ENCODE measurements at regions of chr5 and their contacts with region 1.

Region 1: DNA sequence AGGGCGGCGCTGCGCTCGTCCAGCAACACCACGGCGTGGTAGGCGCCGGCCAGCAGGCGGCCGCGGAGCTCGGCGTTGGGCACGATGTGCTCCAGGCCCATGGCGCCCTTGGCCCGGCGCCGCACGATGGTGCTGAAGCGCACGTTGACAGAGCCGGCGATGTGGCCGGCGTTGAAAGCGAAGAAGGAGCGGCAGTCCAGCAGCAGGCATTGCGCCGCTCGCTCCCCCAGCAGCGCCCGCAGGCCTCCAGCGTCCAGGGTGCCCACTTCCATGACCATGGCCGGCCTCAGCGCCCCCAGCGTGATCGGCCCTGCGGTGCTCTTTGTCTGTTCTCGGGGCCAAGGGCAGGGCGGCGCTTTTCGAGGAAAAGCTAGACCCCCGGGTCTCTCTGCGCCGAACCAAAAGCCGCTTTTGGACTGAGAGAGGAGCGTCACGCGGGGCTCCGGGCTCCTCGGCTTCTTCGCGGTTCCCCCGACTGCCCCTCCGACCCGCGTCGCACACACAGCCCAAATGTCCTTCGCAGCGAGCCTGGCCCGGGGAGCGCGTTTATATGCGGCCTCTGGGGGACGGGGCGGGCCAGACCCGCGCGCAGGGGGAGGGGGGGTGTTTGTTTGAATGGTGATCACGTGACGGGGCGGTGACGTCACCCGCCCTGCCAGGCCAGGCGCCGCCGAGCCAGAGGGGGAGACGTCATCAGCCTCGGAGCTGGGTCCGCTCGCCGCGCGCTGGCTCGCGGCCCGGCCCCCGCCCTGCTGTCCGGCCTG is at the start of gene DUSP1:
- DNase-seq: peak; percentile 100
- H3K4me3 ChIP-seq: peak within 1 kb of the TSS; percentile 78 to 80
- H3K27ac ChIP-seq: peak within 1 kb of the TSS; percentile 96 to 98
- H3K4me1 ChIP-seq: peaks cover 8 to 47% (median 28%) of the 10 kb centered on the region in 4 donors
- H3K27me3 ChIP-seq: no peaks in the 10 kb centered on the region
- CTCF ChIP-seq: peak; percentile 28 to 60

Region 2: DNA sequence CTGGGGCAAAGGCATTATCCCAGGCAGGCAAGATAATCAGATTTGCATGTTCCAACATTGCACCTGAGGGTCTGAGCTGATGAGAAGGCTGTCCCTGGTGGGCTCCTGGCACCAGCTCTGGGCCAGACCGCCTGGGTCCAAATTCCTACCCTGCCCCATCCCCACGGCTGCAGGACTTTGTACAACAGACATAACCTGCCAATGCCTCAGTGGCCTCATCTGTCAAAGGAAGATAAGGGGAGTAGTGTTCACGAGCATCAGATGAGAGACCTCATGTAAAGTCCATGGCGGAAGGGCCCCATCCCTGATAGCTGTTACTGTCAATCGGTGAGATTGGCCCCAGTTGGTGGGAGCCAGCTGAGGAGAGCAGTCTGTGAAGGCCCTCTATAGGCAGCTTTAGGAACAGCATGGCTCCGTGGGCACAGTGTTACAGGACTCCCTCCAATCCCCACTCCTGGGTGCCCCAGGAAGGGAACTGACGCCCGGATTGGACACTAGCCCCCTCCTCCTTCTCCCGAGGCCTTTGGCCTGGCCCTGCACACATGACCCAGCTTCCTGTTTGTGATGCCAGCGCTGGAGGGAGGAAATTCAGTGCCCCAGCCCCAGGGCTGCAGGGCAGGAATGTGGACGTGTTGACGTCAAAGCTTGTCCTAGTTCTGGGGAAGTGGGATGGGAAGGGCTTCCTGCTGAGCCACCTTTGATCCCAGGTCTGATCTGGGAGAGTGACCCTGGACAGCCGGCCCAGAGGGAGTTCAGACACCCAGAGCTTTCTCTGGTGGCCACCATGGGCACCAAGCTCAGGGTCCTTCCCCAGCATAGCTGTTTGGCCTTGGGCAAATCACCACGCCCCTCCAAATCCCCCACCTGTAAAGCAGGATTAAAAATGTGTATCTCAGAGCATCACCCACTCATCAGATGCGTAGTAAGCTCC is 56.1 kb before region 1 on chr5:
- intact Hi-C with region 1: loop called (anchors 2 kb)
- DNase-seq: peak; percentile 89 to 94
- H3K4me3 ChIP-seq: no peak overlapping the region
- H3K27ac ChIP-seq: peak overlapping the region; percentile 60 to 73
- H3K4me1 ChIP-seq: peaks cover 0 to 52% (median 38%) of the 10 kb centered on the region in 4 donors
- H3K27me3 ChIP-seq: peaks cover 0 to 6% of the 10 kb centered on the region in 2 donors
- CTCF ChIP-seq: peak; percentile 81 to 92

Region 3: GRCh38 chr5:172902497-172903200 is 131.8 kb after region 1 on chr5:
- intact Hi-C with region 1: loop called (anchors 2 kb)
- DNase-seq: peak; percentile 79 to 93
- H3K4me3 ChIP-seq: no peak overlapping the region
- H3K27ac ChIP-seq: peak overlapping the region; percentile 92 to 96
- H3K4me1 ChIP-seq: peaks cover 10 to 93% (median 84%) of the 10 kb centered on the region in 4 donors
- H3K27me3 ChIP-seq: no peaks in the 10 kb centered on the region
- CTCF ChIP-seq: peak; percentile 32 to 54

Region 4: DNA sequence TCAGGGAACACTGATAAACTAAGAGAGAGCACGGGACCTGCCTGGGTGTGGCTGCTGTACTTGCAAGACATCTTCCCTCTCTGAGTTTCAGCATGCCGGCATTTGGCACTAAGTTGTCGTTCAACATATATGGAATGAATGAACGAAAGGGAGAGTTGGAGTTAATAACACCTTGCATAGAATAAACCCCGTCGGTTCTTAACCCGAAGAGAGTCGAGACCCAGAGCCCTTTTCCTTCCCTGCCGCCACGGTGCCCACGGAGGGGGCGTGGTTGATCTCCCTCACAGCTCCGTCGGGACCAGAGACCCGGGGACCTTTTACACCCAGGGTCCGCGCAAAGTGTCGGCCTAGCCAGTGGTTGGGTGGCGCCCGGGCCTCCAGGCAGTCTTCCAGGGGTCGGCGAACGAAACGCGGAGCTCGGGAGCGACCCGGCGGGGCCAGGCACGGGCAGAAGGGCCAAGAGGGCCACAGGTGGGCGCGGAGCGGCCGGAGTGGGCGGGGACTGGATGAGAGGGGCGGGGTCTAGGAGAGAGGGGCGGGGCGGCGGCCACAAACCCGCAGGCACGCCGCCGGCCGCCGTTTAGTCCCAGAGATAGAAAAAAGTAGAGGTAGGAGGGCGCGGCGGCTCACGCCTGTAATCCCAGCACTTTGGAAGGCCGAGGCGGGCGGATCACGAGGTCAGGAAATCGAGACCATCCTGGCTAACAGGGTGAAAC is 187.6 kb after region 1 on chr5:
- intact Hi-C with region 1: no loop called
- DNase-seq: peak; percentile 59 to 77
- H3K4me3 ChIP-seq: peak overlapping the region; percentile 85 to 89
- H3K27ac ChIP-seq: peak overlapping the region; percentile 79 to 89
- H3K4me1 ChIP-seq: peaks cover 0 to 65% (median 24%) of the 10 kb centered on the region in 4 donors
- H3K27me3 ChIP-seq: no peaks in the 10 kb centered on the region
- CTCF ChIP-seq: no peak

Measured in tibial artery (tissue), 4 donors.